MCF 10A (cell line): ENCODE measurements at regions of chr1 and their contacts with region 1.

Region 1: GRCh38 chr1:226121587-226122400 is 59.3 kb downstream of the H3-3A start:
- DNase-seq: peak; percentile 72
- H3K4me3 Mint-ChIP-seq: peak overlapping the region; percentile 65
- H3K27ac Mint-ChIP-seq: no peak overlapping the region
- H3K4me1 Mint-ChIP-seq: peaks cover 29% of the 10 kb centered on the region
- H3K27me3 Mint-ChIP-seq: no peaks in the 10 kb centered on the region
- CTCF ChIP-seq: peak; percentile 99

Region 2: GRCh38 chr1:225908773-225909172 is 213.0 kb before region 1 on chr1:
- CTCF ChIA-PET with region 1: no interaction called
- POLR2A ChIA-PET with region 1: no interaction called
- intact Hi-C with region 1: no loop called
- DNase-seq: no peak
- H3K4me3 Mint-ChIP-seq: no peak overlapping the region
- H3K27ac Mint-ChIP-seq: no peak overlapping the region
- H3K4me1 Mint-ChIP-seq: no peaks in the 10 kb centered on the region
- H3K27me3 Mint-ChIP-seq: no peaks in the 10 kb centered on the region
- CTCF ChIP-seq: no peak

Region 3: GRCh38 chr1:225999227-225999911 is 122.4 kb before region 1 on chr1 and contains the start of gene SDE2:
- CTCF ChIA-PET with region 1: interaction called, 12 read pairs
- POLR2A ChIA-PET with region 1: interaction called, 8 read pairs
- intact Hi-C with region 1: loop called (anchors 5 kb)
- DNase-seq: peak; percentile 100
- H3K4me3 Mint-ChIP-seq: peak within 1 kb of the TSS; percentile 88
- H3K27ac Mint-ChIP-seq: peak within 1 kb of the TSS; percentile 99
- H3K4me1 Mint-ChIP-seq: peaks cover 33% of the 10 kb centered on the region
- H3K27me3 Mint-ChIP-seq: no peaks in the 10 kb centered on the region
- CTCF ChIP-seq: no peak
- total RNA-seq, gene SDE2: 59.3 and 61.8 TPM in 2 replicates

Region 4: GRCh38 chr1:226109829-226110248 is 12.0 kb before region 1 on chr1:
- CTCF ChIA-PET with region 1: interaction called, 75 read pairs
- POLR2A ChIA-PET with region 1: interaction called, 45 read pairs
- intact Hi-C with region 1: loop called (anchors 1 kb)
- DNase-seq: peak; percentile 96
- H3K4me3 Mint-ChIP-seq: peak overlapping the region; percentile 83
- H3K27ac Mint-ChIP-seq: peak overlapping the region; percentile 88
- H3K4me1 Mint-ChIP-seq: peaks cover 23% of the 10 kb centered on the region
- H3K27me3 Mint-ChIP-seq: no peaks in the 10 kb centered on the region
- CTCF ChIP-seq: peak; percentile 27

Region 5: DNA sequence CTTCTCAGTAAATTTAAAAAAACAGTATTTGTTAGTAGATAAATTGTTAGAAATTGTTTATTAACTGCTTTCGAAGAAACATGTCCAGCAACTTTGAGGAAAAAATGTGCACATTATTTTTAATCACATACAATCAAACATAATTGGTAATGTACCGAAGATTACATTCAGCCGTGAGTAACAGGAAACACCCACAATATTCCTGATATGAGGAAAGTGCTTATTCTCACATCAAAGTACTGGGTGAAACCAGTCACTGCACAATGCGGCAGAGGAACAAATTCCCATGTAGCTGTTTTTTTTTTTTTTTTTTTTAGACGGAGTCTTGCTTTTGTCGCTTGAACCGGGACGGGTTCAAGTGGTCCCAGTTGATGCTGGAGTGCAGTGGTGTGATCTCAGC is 55.1 kb after region 1 on chr1:
- CTCF ChIA-PET with region 1: interaction called, 153 read pairs
- POLR2A ChIA-PET with region 1: interaction called, 4 read pairs
- intact Hi-C with region 1: no loop called
- DNase-seq: no peak
- H3K4me3 Mint-ChIP-seq: no peak overlapping the region
- H3K27ac Mint-ChIP-seq: no peak overlapping the region
- H3K4me1 Mint-ChIP-seq: peaks cover 35% of the 10 kb centered on the region
- H3K27me3 Mint-ChIP-seq: no peaks in the 10 kb centered on the region
- CTCF ChIP-seq: no peak

Region 6: GRCh38 chr1:226308723-226309315 is 187.0 kb after region 1 on chr1 and contains the start of gene LIN9:
- CTCF ChIA-PET with region 1: interaction called, 16 read pairs
- POLR2A ChIA-PET with region 1: interaction called, 27 read pairs
- intact Hi-C with region 1: no loop called
- DNase-seq: peak; percentile 98
- H3K4me3 Mint-ChIP-seq: peak within 1 kb of the TSS; percentile 84
- H3K27ac Mint-ChIP-seq: peak within 1 kb of the TSS; percentile 82
- H3K4me1 Mint-ChIP-seq: peaks cover 34% of the 10 kb centered on the region
- H3K27me3 Mint-ChIP-seq: no peaks in the 10 kb centered on the region
- CTCF ChIP-seq: no peak
- total RNA-seq, gene LIN9: 10.3 and 10.4 TPM in 2 replicates

Region 7: GRCh38 chr1:226390326-226391080 is 268.7 kb after region 1 on chr1:
- CTCF ChIA-PET with region 1: interaction called, 14 read pairs
- POLR2A ChIA-PET with region 1: no interaction called
- intact Hi-C with region 1: no loop called
- DNase-seq: no peak
- H3K4me3 Mint-ChIP-seq: no peak overlapping the region
- H3K27ac Mint-ChIP-seq: no peak overlapping the region
- H3K4me1 Mint-ChIP-seq: no peaks in the 10 kb centered on the region
- H3K27me3 Mint-ChIP-seq: no peaks in the 10 kb centered on the region
- CTCF ChIP-seq: no peak

Region 8: DNA sequence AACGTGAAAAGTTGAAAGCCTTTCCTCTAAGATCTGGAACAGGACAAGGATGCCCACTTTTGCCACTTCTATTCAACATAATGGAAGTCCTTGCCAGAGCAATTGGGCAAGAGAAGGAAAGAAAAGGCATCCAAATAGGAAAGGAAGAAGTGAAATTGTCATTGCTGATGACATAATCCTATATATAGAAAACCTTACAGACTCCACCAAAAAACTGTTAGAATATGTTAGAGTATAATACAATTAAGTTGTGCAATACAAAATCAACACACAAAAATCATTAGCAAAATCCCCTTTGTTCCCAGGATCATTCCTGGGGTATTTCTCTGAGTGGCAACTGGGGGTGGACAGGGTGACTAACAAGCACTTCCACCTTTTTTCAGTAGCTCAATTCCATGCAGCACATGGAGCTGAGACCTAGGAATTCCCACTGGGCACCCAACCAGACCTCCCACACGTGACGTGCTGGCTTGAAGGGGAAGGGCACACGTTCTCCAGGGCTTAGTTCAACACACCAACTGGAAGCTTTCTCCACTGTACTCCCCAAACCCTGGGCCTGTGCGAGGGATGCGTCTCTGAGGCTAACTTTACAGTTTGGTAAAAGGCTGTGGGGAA is 436.3 kb after region 1 on chr1:
- CTCF ChIA-PET with region 1: no interaction called
- POLR2A ChIA-PET with region 1: no interaction called
- intact Hi-C with region 1: no loop called
- DNase-seq: peak; percentile 26
- H3K4me3 Mint-ChIP-seq: no peak overlapping the region
- H3K27ac Mint-ChIP-seq: no peak overlapping the region
- H3K4me1 Mint-ChIP-seq: no peaks in the 10 kb centered on the region
- H3K27me3 Mint-ChIP-seq: peaks cover 39% of the 10 kb centered on the region
- CTCF ChIP-seq: no peak